ENCODE measurements at regions of chr17 and their contacts with region 1.

Region 1: GRCh38 chr17:57121338-57122042 is 36.4 kb downstream of the AKAP1 start:
- DNase-seq: no peak
- ATAC-seq: peak; percentile 56; the same call in 2 of the 3 replicates
- H3K4me3 ChIP-seq: no peak overlapping the region
- H3K27ac ChIP-seq: no peak overlapping the region
- H3K4me1 ChIP-seq: no peaks in the 10 kb centered on the region
- H3K27me3 ChIP-seq: no peaks in the 10 kb centered on the region
- CTCF ChIP-seq: peak; percentile 38 to 44 (median 41); a peak in 5 of 6 replicates
- EP300 ChIP-seq: no peak
- POLR2A ChIP-seq: no peak
- RAD21 ChIP-seq: peak; percentile 31

Region 2: DNA sequence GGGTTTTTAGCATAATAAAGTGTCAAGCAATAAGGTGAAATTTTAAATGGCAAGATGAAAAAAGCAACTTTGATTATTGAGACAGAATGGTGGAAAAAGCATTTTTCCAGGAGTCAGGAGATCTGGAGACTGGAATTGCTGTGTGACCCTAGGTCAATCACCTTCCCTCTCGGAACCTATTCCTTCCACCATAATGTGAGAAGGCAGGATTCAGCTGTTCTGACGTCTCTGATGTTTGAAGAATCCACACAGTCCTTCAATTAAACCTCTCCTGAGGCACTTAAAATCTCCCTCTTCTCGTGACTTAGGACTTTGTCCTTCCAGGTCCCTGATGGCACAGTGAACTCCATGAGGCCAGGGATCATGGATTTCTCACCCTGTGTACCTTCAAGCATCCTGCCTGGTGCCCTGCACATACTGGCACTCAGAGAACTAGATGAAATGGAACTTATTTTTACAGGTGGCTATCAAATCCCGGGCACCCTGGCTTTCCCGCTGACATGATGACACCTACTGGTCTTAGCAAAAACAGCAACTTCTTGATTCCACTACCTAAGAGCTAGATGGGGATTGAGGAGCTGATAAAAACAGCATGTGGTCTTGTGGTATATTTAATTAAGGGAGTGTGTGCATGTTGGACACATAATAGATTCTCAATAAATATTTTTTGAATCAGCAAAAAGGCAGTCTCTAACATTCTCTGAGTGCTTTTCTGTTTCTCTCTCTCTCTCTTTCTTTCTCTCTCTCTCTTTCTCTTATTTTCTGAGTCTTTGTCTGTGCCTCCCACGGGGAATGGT is 625.9 kb after region 1 on chr17:
- CTCF ChIA-PET with region 1: interaction called, 16 read pairs
- POLR2A ChIA-PET with region 1: no interaction called
- RAD21 ChIA-PET with region 1: interaction called, 4 read pairs
- SMC1A ChIA-PET with region 1: interaction called, 3 read pairs
- in situ Hi-C with region 1: loop called (anchors 5 kb)
- intact Hi-C with region 1: no loop called
- DNase-seq: no peak
- ATAC-seq: peak; percentile 83
- H3K4me3 ChIP-seq: no peak overlapping the region
- H3K27ac ChIP-seq: no peak overlapping the region
- H3K4me1 ChIP-seq: peaks cover 12% of the 10 kb centered on the region
- H3K27me3 ChIP-seq: no peaks in the 10 kb centered on the region; a peak in 2 of 4 replicates
- CTCF ChIP-seq: peak; percentile 79 to 87 (median 84)
- EP300 ChIP-seq: no peak
- POLR2A ChIP-seq: no peak
- RAD21 ChIP-seq: peak; percentile 94

Region 3: GRCh38 chr17:57838857-57839570 is 717.5 kb after region 1 on chr17:
- CTCF ChIA-PET with region 1: no interaction called
- POLR2A ChIA-PET with region 1: no interaction called
- RAD21 ChIA-PET with region 1: no interaction called
- SMC1A ChIA-PET with region 1: no interaction called
- in situ Hi-C with region 1: loop called (anchors 5 kb)
- intact Hi-C with region 1: no loop called
- DNase-seq: no peak
- ATAC-seq: no peak
- H3K4me3 ChIP-seq: no peak overlapping the region
- H3K27ac ChIP-seq: no peak overlapping the region
- H3K4me1 ChIP-seq: no peaks in the 10 kb centered on the region
- H3K27me3 ChIP-seq: no peaks in the 10 kb centered on the region
- CTCF ChIP-seq: no peak
- EP300 ChIP-seq: no peak
- POLR2A ChIP-seq: no peak
- RAD21 ChIP-seq: no peak